Psoas muscle (tissue), 8 donors: ENCODE measurements at regions of chr18 and their contacts with region 1.

Region 1: GRCh38 chr18:63199743-63200241 is 119.8 kb downstream of the BCL2 start:
- DNase-seq: no peak
- ATAC-seq: peak in 1 of 4 donors; percentile 23
- H3K4me3 ChIP-seq: no peak overlapping the region
- H3K27ac ChIP-seq: no peak overlapping the region
- H3K4me1 ChIP-seq: peaks cover 53% of the 10 kb centered on the region
- H3K27me3 ChIP-seq: no peaks in the 10 kb centered on the region
- CTCF ChIP-seq: no peak

Region 2: GRCh38 chr18:63237881-63238667 is 38.3 kb after region 1 on chr18:
- intact Hi-C with region 1: loop called in 1 of 2 experiments (anchors 5 kb)
- DNase-seq: peak; percentile 24 to 64
- ATAC-seq: peak; percentile 78 to 86 (median 84)
- H3K4me3 ChIP-seq: peak overlapping the region; percentile 46
- H3K27ac ChIP-seq: peak overlapping the region; percentile 85
- H3K4me1 ChIP-seq: peaks cover 31% of the 10 kb centered on the region
- H3K27me3 ChIP-seq: no peaks in the 10 kb centered on the region
- CTCF ChIP-seq: no peak

Region 3: GRCh38 chr18:63476666-63477065 is 276.9 kb after region 1 on chr18 and contains the start of gene SERPINB5:
- intact Hi-C with region 1: no loop called
- DNase-seq: no peak
- ATAC-seq: no peak
- H3K4me3 ChIP-seq: no peak within 1 kb of the TSS
- H3K27ac ChIP-seq: no peak within 1 kb of the TSS
- H3K4me1 ChIP-seq: no peaks in the 10 kb centered on the region
- H3K27me3 ChIP-seq: no peaks in the 10 kb centered on the region
- CTCF ChIP-seq: no peak
- total RNA-seq, gene SERPINB5: not detected